GM10248 (cell line): ENCODE measurements at regions of chr2 and their contacts with region 1.

Region 1: GRCh38 chr2:189848276-189848675 is 64.0 kb downstream of the PMS1 start:
- DNase-seq: no peak
- CTCF ChIP-seq: no peak

Region 2: GRCh38 chr2:189860161-189860560 is 11.9 kb after region 1 on chr2:
- CTCF ChIA-PET with region 1: interaction called, 17 read pairs
- POLR2A ChIA-PET with region 1: no interaction called
- DNase-seq: no peak
- CTCF ChIP-seq: no peak

Region 3: GRCh38 chr2:190173392-190173791 is 325.1 kb after region 1 on chr2:
- CTCF ChIA-PET with region 1: no interaction called
- POLR2A ChIA-PET with region 1: no interaction called
- DNase-seq: no peak
- CTCF ChIP-seq: no peak